ENCODE measurements at regions of chr2 and their contacts with region 1.

Region 1: GRCh38 chr2:40401896-40402295 is 50.0 kb downstream of the SLC8A1 start:
- DNase-seq: peak; percentile 94
- ATAC-seq: peak; percentile 98
- H3K4me3 ChIP-seq: peak overlapping the region; percentile 24; the same call in 1 of the 2 replicates
- H3K27ac ChIP-seq: peak overlapping the region; percentile 64
- H3K4me1 ChIP-seq: peaks cover 31% of the 10 kb centered on the region
- H3K27me3 ChIP-seq: no peaks in the 10 kb centered on the region
- CTCF ChIP-seq: no peak

Region 2: DNA sequence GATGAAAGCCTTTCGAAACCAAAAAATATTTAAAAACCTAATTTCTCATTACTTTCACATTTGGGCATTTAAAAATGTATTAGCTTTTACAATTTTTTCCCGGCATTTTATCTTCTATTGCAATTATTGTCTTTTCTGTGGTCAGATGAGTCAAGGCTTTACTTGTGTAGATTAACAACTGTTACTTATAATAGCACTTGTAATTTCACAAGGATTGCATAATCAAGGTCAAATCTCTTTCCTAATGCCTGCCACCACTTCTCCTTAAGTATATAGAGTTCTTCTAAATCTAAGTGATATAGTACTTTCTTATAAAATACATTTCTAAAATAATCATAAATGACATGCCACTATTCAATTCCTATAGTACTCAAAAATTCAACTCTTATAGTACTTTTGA is 17.2 kb before region 1 on chr2:
- CTCF ChIA-PET with region 1: no interaction called
- POLR2A ChIA-PET with region 1: no interaction called
- intact Hi-C with region 1: loop called (anchors 2 kb)
- DNase-seq: peak; percentile 76
- ATAC-seq: peak; percentile 67; the same call in 1 of the 2 replicates
- H3K4me3 ChIP-seq: no peak overlapping the region
- H3K27ac ChIP-seq: peak overlapping the region; percentile 33
- H3K4me1 ChIP-seq: peaks cover 12% of the 10 kb centered on the region
- H3K27me3 ChIP-seq: no peaks in the 10 kb centered on the region
- CTCF ChIP-seq: no peak